Breast epithelium (tissue), 4 donors: ENCODE measurements at regions of chr3 and their contacts with region 1.

Region 1: DNA sequence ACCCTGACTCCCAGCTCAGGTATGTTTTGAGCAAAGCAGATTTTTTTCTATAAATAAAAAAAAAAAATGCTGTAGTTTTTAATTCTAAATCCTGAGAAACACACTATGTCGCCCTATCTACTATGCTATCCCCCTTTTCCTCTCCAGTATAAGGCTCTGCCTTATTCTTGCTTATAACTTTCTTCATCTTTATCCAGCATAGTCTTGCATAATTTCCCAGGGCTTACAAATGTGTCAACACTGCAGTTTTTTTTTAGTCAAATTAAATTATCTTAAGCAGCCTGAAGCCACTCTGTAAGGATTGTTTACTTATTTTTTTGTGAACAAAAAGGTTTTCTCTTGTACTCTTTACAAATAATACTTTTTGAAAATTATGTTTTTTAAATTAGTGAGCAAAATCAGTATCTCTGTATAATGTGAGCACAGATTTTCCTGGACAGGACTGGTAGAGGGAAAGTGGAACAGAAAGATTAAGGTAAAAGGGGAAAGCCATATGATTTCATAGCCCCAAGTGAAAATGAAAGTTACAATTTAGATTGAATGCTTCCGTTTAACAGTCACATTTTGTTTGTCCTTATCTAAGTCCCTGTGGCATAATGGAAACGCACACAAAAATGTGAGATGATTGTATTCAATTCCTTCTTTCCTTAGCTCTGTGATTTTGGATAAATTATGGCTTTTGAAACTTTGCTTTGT is 5.6 kb upstream of the PYDC2 start:
- DNase-seq: no peak
- H3K4me3 ChIP-seq: no peak overlapping the region
- H3K27ac ChIP-seq: no peak overlapping the region
- H3K4me1 ChIP-seq: no peaks in the 10 kb centered on the region
- H3K27me3 ChIP-seq: no peaks in the 10 kb centered on the region
- CTCF ChIP-seq: no peak
- POLR2A ChIP-seq: no peak

Region 2: DNA sequence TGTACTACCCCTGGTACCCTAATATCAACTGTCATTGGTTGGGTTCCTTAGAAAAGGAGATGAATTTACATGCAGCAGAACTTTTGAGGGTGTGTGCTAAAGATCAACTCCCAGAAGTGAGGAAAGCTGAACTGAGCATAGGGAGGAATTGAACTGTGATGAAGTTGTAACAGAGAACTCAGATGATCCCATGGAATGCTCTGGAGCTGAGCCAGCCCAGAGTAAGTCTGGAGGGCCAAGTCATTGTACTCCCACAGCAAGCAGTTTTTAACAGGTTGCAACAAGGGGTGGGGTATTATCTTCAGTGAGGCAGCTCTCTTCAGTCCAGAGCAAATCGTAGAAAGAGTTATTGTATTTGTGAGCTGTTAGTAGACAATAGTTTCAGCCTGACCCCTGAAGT is 577.8 kb after region 1 on chr3:
- intact Hi-C with region 1: loop called (anchors 5 kb)
- DNase-seq: no peak
- H3K4me3 ChIP-seq: no peak overlapping the region
- H3K27ac ChIP-seq: no peak overlapping the region
- H3K4me1 ChIP-seq: no peaks in the 10 kb centered on the region
- H3K27me3 ChIP-seq: no peaks in the 10 kb centered on the region
- CTCF ChIP-seq: no peak
- POLR2A ChIP-seq: no peak